Dorsolateral prefrontal cortex (tissue), 120 donors: ENCODE measurements at regions of chr3 and their contacts with region 1.

Region 1: DNA sequence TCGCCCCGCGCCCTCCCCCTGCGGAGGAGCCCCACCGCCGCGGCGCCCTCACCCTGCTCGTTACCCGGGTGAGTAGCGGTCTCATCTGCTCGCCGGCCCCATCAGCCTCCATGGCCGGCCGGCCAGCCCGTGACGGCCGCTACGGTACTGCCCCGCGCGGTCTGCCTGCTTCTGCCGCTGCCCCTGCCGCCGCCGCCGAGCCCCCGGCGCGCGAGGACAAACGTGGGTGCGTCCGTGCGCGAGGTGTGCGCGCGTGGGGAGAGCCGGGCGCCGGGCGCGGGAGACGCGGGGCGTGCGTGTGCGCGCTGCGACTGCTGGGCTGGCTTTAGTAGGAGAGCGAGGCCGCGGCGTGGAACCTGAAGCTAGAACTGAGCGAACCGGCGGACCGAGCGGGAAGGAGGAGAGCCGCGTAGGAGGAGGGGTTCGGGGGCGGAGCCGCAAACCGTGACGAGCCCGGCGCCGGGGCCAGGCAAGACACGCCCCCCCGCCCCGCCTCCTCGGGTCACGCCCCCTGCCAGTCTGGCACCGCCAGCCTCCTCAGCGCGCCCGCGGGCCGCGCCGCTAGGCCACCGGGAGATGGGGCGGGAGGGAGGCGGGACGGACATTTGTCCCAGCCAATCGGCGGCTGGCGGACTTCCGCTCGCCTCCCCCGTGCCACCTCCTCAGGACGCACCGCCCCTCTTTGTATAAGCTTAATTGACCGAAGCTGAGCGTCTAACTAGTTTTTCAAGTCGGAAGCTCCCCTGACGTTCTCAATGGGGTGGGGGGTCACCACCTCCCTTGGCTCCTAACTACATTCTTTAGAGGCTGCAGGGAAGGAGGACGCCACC is at the start of gene SLC4A7:
- DNase-seq: peak; percentile 96 to 99 (median 98)
- H3K4me3 ChIP-seq: peak within 1 kb of the TSS; percentile 62 to 95 (median 82)
- H3K27ac ChIP-seq: peak within 1 kb of the TSS; percentile 46 to 97 (median 89)
- H3K27me3 ChIP-seq: no peaks in the 10 kb centered on the region
- CTCF ChIP-seq: peak in 31 of 56 donors; percentile 5 to 59 (median 30)
- total RNA-seq, gene SLC4A7: 23.8 to 95.2 (median 65.4) TPM

Region 2: GRCh38 chr3:27253831-27254230 is 230.4 kb before region 1 on chr3:
- intact Hi-C with region 1: no loop called
- DNase-seq: peak in 5 of 10 donors; percentile 3 to 41 (median 27)
- H3K4me3 ChIP-seq: no peak overlapping the region
- H3K27ac ChIP-seq: no peak overlapping the region
- H3K27me3 ChIP-seq: no peaks in the 10 kb centered on the region
- CTCF ChIP-seq: peak in 42 of 56 donors; percentile 14 to 55 (median 34)

Region 3: GRCh38 chr3:27533718-27534573 is 49.7 kb after region 1 on chr3:
- intact Hi-C with region 1: loop called in 1 of 2 experiments (anchors 10 kb)
- DNase-seq: peak in 3 of 10 donors; percentile 39 to 68 (median 40)
- H3K4me3 ChIP-seq: no peak overlapping the region
- H3K27ac ChIP-seq: peak overlapping the region in 52 of 59 donors; percentile 1 to 80 (median 58)
- H3K27me3 ChIP-seq: no peaks in the 10 kb centered on the region
- CTCF ChIP-seq: no peak

Region 4: GRCh38 chr3:27659279-27660021 is 175.2 kb after region 1 on chr3:
- intact Hi-C with region 1: loop called in 1 of 2 experiments (anchors 10 kb)
- DNase-seq: peak in 1 of 10 donors; percentile 41
- H3K4me3 ChIP-seq: no peak overlapping the region
- H3K27ac ChIP-seq: no peak overlapping the region
- H3K27me3 ChIP-seq: no peaks in the 10 kb centered on the region
- CTCF ChIP-seq: peak in 55 of 56 donors; percentile 19 to 73 (median 61)

Region 5: GRCh38 chr3:27681245-27681748 is 197.1 kb after region 1 on chr3:
- intact Hi-C with region 1: loop called in 1 of 2 experiments (anchors 10 kb)
- DNase-seq: no peak
- H3K4me3 ChIP-seq: peak overlapping the region in 48 of 59 donors; percentile 5 to 53 (median 31)
- H3K27ac ChIP-seq: peak overlapping the region in 1 of 59 donors; percentile 51
- H3K27me3 ChIP-seq: no peaks in the 10 kb centered on the region
- CTCF ChIP-seq: peak; percentile 51 to 91 (median 77)

Region 6: DNA sequence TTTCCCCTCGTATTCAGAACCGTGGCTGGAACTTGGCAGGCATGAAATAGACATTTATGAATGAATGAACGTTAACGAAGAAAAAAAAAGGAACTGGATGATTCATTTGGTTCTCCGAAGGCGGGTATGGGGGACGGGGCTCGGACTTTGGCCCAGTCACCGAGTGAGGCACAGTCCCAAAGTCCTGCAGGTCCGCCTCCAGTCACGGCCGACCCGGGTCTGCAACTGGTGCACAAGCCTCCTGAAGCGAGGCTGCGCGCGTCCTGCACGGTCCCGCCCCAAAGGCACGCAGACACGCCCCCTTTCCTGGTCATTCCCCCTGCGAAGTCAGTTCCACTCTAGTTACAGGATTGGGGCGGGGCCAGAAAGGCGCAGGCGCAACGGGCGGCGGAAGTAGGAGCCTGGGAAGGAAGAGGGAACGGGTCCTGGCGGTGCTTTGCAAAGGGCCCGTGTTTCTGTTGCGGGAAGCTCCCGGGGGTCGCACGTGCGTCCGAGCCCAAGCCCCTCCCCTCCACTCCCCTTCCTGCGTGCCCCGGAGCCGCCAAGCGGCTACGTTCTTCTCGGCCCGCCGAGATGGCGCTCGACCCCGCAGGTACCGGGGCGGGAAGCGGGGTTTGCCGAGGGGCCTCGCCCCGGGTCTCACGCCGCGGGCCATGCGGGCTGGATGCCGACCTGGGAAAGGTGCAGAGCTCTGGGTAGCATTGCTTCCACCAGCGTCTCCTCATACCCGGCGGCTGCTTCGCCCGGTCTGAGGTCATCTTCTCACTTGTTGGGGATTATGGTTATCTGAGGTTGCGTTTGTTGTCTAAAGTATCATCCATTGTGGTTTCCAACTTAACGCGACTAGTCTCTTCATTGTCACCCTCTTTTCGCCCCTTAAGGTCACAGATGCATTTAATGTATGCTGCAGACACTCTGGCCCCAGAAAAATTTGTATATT is 757.3 kb after region 1 on chr3 and contains the start of gene CMC1:
- intact Hi-C with region 1: loop called in 1 of 2 experiments (anchors 10 kb)
- DNase-seq: peak; percentile 94 to 98 (median 97)
- H3K4me3 ChIP-seq: peak within 1 kb of the TSS; percentile 63 to 100 (median 91)
- H3K27ac ChIP-seq: peak within 1 kb of the TSS in 52 of 59 donors; percentile 3 to 90 (median 72)
- H3K27me3 ChIP-seq: no peaks in the 10 kb centered on the region
- CTCF ChIP-seq: peak in 30 of 56 donors; percentile 5 to 57 (median 24)
- total RNA-seq, gene CMC1: 10.0 to 27.2 (median 17.9) TPM

Region 7: GRCh38 chr3:28348629-28349483 is 864.6 kb after region 1 on chr3 and contains the starts of genes AZI2 and ZCWPW2:
- intact Hi-C with region 1: loop called in 1 of 2 experiments (anchors 10 kb)
- DNase-seq: peak; percentile 78 to 93 (median 89)
- H3K4me3 ChIP-seq: peak within 1 kb of the TSS; percentile 50 to 98 (median 86)
- H3K27ac ChIP-seq: peak within 1 kb of the TSS; percentile 86 to 100 (median 97)
- H3K27me3 ChIP-seq: no peaks in the 10 kb centered on the region
- CTCF ChIP-seq: peak in 45 of 56 donors; percentile 8 to 64 (median 36)
- total RNA-seq, gene AZI2: 42.8 to 93.5 (median 68.1) TPM
- total RNA-seq, gene ZCWPW2: 3.0 to 9.4 (median 5.4) TPM